OCI-LY7 (cell line): ENCODE measurements at regions of chr4 and their contacts with region 1.

Region 1: DNA sequence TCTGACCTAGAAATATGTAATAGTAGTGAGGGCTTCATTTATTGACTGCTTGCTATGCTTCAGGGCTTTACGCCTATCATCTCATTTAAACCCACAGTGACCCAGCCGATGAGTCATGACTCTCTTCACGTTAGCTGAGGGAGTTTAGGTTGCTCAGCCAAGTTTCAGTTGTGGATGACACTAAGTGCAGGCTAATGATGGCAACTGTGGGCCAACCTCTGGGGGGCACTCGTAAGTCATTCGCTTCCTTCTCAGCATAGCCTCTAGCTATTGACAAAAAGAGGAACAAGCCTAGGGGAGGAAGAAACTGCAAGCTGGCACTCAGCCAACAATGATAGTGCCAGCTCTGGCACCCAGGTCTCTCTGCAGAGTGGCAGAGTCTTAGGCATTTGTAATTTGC is 325.0 kb downstream of the ARHGAP10 start:
- DNase-seq: peak; percentile 94
- H3K4me3 ChIP-seq: peak overlapping the region; percentile 29
- H3K27ac ChIP-seq: peak overlapping the region; percentile 62
- H3K4me1 ChIP-seq: peaks cover 82% of the 10 kb centered on the region
- CTCF ChIP-seq: peak; percentile 91

Region 2: GRCh38 chr4:148116264-148116663 is 59.4 kb after region 1 on chr4:
- CTCF ChIA-PET with region 1: no interaction called
- POLR2A ChIA-PET with region 1: no interaction called
- intact Hi-C with region 1: no loop called
- DNase-seq: no peak
- H3K4me3 ChIP-seq: no peak overlapping the region
- H3K27ac ChIP-seq: no peak overlapping the region
- H3K4me1 ChIP-seq: no peaks in the 10 kb centered on the region
- CTCF ChIP-seq: no peak

Region 3: DNA sequence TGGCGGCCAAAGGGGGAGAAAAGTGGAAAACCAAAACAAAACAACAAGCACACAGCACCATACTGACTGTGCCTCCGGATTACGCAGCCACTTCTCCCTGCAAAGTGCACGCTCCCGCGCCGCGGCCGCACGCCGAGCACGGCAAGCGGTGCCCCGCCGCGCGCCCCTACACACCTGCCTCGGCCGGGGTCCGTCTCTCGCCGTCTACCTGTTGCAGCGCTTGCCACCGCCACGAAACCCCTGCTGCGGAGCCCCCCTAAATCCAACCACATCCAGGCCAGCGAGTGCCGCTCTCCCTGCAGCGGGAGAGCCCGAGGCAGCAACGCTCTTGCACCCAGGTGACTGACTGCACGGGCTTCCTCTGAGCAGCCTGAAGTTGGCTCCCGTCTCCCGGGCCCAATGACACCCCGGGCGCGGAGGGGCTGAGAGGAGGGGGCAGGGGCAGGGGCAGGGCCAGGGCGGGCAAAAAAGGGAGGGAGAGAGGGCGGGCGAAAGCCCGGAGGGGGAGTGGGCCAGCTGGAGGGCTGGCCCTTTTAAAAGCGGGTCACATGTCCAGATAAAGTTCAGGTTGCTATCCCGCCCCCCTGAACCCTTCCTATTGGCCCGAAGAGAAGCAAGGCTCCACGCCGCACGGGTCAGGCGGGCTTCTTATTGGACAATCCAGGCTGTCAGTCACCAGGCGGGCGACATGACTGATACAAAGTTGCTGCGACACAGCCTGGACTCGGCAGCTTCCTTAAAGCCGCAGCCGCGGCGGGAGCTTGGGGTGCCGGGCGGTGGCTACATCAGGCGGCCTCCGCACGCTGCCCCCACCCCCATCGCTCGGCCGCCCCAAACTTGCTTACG is 385.3 kb after region 1 on chr4 and contains the start of gene NR3C2:
- CTCF ChIA-PET with region 1: no interaction called
- POLR2A ChIA-PET with region 1: interaction called, 5 read pairs
- intact Hi-C with region 1: loop called (anchors 2 kb)
- DNase-seq: peak; percentile 98
- H3K4me3 ChIP-seq: peak within 1 kb of the TSS; percentile 82
- H3K27ac ChIP-seq: peak within 1 kb of the TSS; percentile 17
- H3K4me1 ChIP-seq: peaks cover 14% of the 10 kb centered on the region
- CTCF ChIP-seq: no peak
- total RNA-seq, gene NR3C2: 2.7 and 5.2 TPM in 2 replicates

Region 4: GRCh38 chr4:148980782-148981480 is 924.1 kb after region 1 on chr4:
- CTCF ChIA-PET with region 1: no interaction called
- POLR2A ChIA-PET with region 1: no interaction called
- intact Hi-C with region 1: loop called (anchors 5 kb)
- DNase-seq: no peak
- H3K4me3 ChIP-seq: no peak overlapping the region
- H3K27ac ChIP-seq: peak overlapping the region; percentile 98
- H3K4me1 ChIP-seq: peaks cover 65% of the 10 kb centered on the region
- CTCF ChIP-seq: no peak

Region 5: GRCh38 chr4:149264093-149264733 is 1207.3 kb after region 1 on chr4:
- CTCF ChIA-PET with region 1: no interaction called
- POLR2A ChIA-PET with region 1: interaction called, 3 read pairs
- intact Hi-C with region 1: loop called (anchors 10 kb)
- DNase-seq: peak; percentile 61
- H3K4me3 ChIP-seq: no peak overlapping the region
- H3K27ac ChIP-seq: no peak overlapping the region
- H3K4me1 ChIP-seq: no peaks in the 10 kb centered on the region
- CTCF ChIP-seq: peak; percentile 90